IMR-90 (cell line): ENCODE measurements at regions of chr7 and their contacts with region 1.

Region 1: GRCh38 chr7:106009403-106010226 is 46.6 kb downstream of the CDHR3 start:
- DNase-seq: peak; percentile 98
- ATAC-seq: peak; percentile 84
- H3K4me3 ChIP-seq: no peak overlapping the region
- H3K27ac ChIP-seq: peak overlapping the region; percentile 95
- H3K4me1 ChIP-seq: peaks cover 26% of the 10 kb centered on the region
- H3K27me3 ChIP-seq: no peaks in the 10 kb centered on the region
- CTCF ChIP-seq: peak; percentile 98
- POLR2A ChIP-seq: no peak
- RAD21 ChIP-seq: peak; percentile 87

Region 2: GRCh38 chr7:105652359-105652993 is 357.1 kb before region 1 on chr7:
- CTCF ChIA-PET with region 1: no interaction called
- POLR2A ChIA-PET with region 1: no interaction called
- dilution Hi-C with region 1: no loop called
- in situ Hi-C with region 1: no loop called
- intact Hi-C with region 1: loop called (anchors 1 kb)
- DNase-seq: peak; percentile 71
- ATAC-seq: peak; percentile 94
- H3K4me3 ChIP-seq: no peak overlapping the region
- H3K27ac ChIP-seq: no peak overlapping the region
- H3K4me1 ChIP-seq: peaks cover 10% of the 10 kb centered on the region; the same call in 1 of the 2 replicates
- H3K27me3 ChIP-seq: no peaks in the 10 kb centered on the region
- CTCF ChIP-seq: peak; percentile 85
- POLR2A ChIP-seq: no peak
- RAD21 ChIP-seq: peak; percentile 94

Region 3: GRCh38 chr7:105769901-105770628 is 239.6 kb before region 1 on chr7:
- CTCF ChIA-PET with region 1: no interaction called
- POLR2A ChIA-PET with region 1: no interaction called
- dilution Hi-C with region 1: no loop called
- in situ Hi-C with region 1: loop called (anchors 5 kb)
- intact Hi-C with region 1: no loop called
- DNase-seq: peak; percentile 51
- ATAC-seq: peak; percentile 54
- H3K4me3 ChIP-seq: no peak overlapping the region
- H3K27ac ChIP-seq: peak overlapping the region; percentile 71; the same call in 1 of the 2 replicates
- H3K4me1 ChIP-seq: peaks cover 27% of the 10 kb centered on the region
- H3K27me3 ChIP-seq: no peaks in the 10 kb centered on the region
- CTCF ChIP-seq: no peak
- POLR2A ChIP-seq: no peak
- RAD21 ChIP-seq: no peak

Region 4: DNA sequence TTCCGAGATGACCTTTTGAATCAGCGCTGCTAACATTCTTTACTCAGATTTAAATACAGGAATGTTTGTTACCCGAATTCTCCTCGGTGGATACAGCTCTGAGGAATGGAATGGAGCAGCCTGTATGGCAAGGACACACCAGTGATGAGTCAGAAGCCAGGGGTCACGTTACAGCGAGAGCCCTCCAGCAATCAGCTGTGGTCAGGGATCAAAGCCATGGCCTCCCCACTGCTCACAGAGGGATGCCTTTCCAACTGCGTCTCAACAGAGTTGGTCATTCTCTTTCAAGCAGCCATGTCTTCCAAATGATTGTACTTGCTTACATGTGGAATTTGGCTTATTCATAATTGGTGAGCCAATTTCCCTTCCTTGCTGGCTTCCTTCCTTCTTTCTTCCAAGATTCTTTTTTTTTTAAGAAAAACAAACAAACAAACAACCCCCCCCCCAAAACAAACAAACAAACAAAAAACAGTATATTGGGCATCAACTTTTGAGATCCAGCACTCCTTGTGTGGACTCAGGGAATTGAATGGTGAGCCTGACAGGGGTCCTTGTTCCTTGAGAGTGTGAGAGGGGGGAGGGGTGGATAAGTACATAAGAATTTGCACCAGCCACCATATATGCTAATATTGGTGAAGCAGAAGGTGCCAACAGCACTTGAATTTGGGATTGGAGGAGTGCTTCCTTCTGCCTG is 233.4 kb before region 1 on chr7:
- CTCF ChIA-PET with region 1: interaction called, 4 read pairs
- POLR2A ChIA-PET with region 1: no interaction called
- dilution Hi-C with region 1: no loop called
- in situ Hi-C with region 1: no loop called
- intact Hi-C with region 1: loop called (anchors 1 kb)
- DNase-seq: peak; percentile 100
- ATAC-seq: peak; percentile 99
- H3K4me3 ChIP-seq: no peak overlapping the region
- H3K27ac ChIP-seq: peak overlapping the region; percentile 84
- H3K4me1 ChIP-seq: peaks cover 22% of the 10 kb centered on the region
- H3K27me3 ChIP-seq: no peaks in the 10 kb centered on the region
- CTCF ChIP-seq: no peak
- POLR2A ChIP-seq: no peak
- RAD21 ChIP-seq: no peak; the same call in 1 of the 2 replicates

Region 5: GRCh38 chr7:105795390-105795729 is 214.3 kb before region 1 on chr7:
- CTCF ChIA-PET with region 1: no interaction called
- POLR2A ChIA-PET with region 1: no interaction called
- dilution Hi-C with region 1: no loop called
- in situ Hi-C with region 1: no loop called
- intact Hi-C with region 1: loop called (anchors 1 kb)
- DNase-seq: peak; percentile 84
- ATAC-seq: peak; percentile 45
- H3K4me3 ChIP-seq: no peak overlapping the region
- H3K27ac ChIP-seq: peak overlapping the region; percentile 61; the same call in 1 of the 2 replicates
- H3K4me1 ChIP-seq: peaks cover 25% of the 10 kb centered on the region
- H3K27me3 ChIP-seq: no peaks in the 10 kb centered on the region
- CTCF ChIP-seq: no peak
- POLR2A ChIP-seq: no peak
- RAD21 ChIP-seq: no peak

Region 6: GRCh38 chr7:105876091-105876963 is 133.3 kb before region 1 on chr7 and contains the start of gene ATXN7L1:
- CTCF ChIA-PET with region 1: interaction called, 4 read pairs
- POLR2A ChIA-PET with region 1: no interaction called
- dilution Hi-C with region 1: no loop called
- in situ Hi-C with region 1: no loop called
- intact Hi-C with region 1: loop called (anchors 1 kb)
- DNase-seq: peak; percentile 98
- ATAC-seq: peak; percentile 97
- H3K4me3 ChIP-seq: peak within 1 kb of the TSS; percentile 82
- H3K27ac ChIP-seq: peak within 1 kb of the TSS; percentile 91
- H3K4me1 ChIP-seq: peaks cover 9% of the 10 kb centered on the region; the same call in 1 of the 2 replicates
- H3K27me3 ChIP-seq: no peaks in the 10 kb centered on the region
- CTCF ChIP-seq: peak; percentile 72
- POLR2A ChIP-seq: peak; percentile 87
- RAD21 ChIP-seq: peak; percentile 49
- total RNA-seq, gene ATXN7L1: 4.3 and 4.7 TPM in 2 replicates

Region 7: GRCh38 chr7:106166655-106167342 is 157.2 kb after region 1 on chr7:
- CTCF ChIA-PET with region 1: no interaction called
- POLR2A ChIA-PET with region 1: no interaction called
- dilution Hi-C with region 1: no loop called
- in situ Hi-C with region 1: no loop called
- intact Hi-C with region 1: no loop called
- DNase-seq: peak; percentile 83
- ATAC-seq: peak; percentile 74
- H3K4me3 ChIP-seq: no peak overlapping the region
- H3K27ac ChIP-seq: no peak overlapping the region
- H3K4me1 ChIP-seq: no peaks in the 10 kb centered on the region
- H3K27me3 ChIP-seq: peaks cover 9% of the 10 kb centered on the region
- CTCF ChIP-seq: peak; percentile 85
- POLR2A ChIP-seq: no peak
- RAD21 ChIP-seq: peak; percentile 66

Region 8: GRCh38 chr7:106329971-106330733 is 320.5 kb after region 1 on chr7:
- CTCF ChIA-PET with region 1: no interaction called
- POLR2A ChIA-PET with region 1: no interaction called
- dilution Hi-C with region 1: no loop called
- in situ Hi-C with region 1: no loop called
- intact Hi-C with region 1: no loop called
- DNase-seq: peak; percentile 79
- ATAC-seq: peak; percentile 89
- H3K4me3 ChIP-seq: no peak overlapping the region
- H3K27ac ChIP-seq: no peak overlapping the region
- H3K4me1 ChIP-seq: peaks cover 13% of the 10 kb centered on the region
- H3K27me3 ChIP-seq: no peaks in the 10 kb centered on the region
- CTCF ChIP-seq: no peak
- POLR2A ChIP-seq: no peak
- RAD21 ChIP-seq: no peak